PC-3 (cell line): ENCODE measurements at regions of chr11 and their contacts with region 1.

Region 1: GRCh38 chr11:13668102-13668956 is at the start of gene FAR1:
- DNase-seq: peak; percentile 98
- ATAC-seq: peak; percentile 86
- H3K4me3 ChIP-seq: peak within 1 kb of the TSS; percentile 92
- H3K27ac ChIP-seq: peak within 1 kb of the TSS; percentile 28; the same call in 1 of the 2 replicates
- H3K4me1 ChIP-seq: peaks cover 28% of the 10 kb centered on the region
- H3K27me3 ChIP-seq: no peaks in the 10 kb centered on the region
- CTCF ChIP-seq: peak; percentile 54
- total RNA-seq, gene FAR1: 31.6 and 45.6 TPM in 2 replicates

Region 2: DNA sequence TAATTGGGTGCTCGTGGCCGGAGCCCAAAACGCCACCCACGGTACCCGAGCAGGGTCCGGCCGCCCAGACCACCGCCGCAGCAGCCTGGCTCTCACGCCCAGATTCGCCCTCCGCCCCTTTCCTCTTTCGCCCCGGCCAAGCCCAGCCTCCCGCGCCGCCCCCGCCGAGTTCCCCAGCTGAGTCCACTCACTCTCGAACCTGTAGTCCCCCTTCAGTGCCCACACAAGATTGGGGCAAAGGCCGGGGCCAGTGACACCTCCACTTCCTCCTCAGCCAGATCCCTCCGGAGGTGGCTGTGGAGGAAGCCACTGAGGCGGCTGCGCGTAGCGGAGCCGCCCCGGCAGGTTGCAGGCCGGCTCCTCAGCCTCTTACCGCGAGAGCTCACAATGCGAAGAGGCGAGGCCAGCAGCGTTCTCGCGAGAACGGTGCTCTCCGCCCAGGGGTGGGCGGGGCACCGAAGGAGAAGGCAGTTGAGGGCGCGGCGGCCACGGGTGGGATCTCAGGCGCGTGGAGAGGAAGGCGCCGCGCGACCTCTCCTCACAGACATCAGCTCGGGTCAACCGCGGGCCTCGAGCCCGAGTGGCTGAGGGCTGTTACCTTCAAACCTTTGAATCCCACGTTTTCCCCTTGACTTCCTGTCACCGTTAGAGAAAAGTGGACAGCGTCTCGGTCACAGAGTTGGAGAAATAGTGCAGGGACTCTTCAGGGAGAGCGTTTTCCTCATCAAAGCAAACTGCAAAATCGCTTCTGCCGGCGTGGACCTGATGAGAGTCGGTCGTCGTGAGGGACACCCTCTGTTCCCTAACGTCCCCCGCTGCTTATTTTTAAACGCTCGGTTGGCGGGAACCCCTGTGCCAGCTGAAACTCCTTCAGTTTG is 205.2 kb before region 1 on chr11 and contains the start of gene BTBD10:
- CTCF ChIA-PET with region 1: no interaction called
- POLR2A ChIA-PET with region 1: no interaction called
- intact Hi-C with region 1: loop called (anchors 10 kb)
- DNase-seq: peak; percentile 97
- ATAC-seq: peak; percentile 97
- H3K4me3 ChIP-seq: peak within 1 kb of the TSS; percentile 92
- H3K27ac ChIP-seq: peak within 1 kb of the TSS; percentile 67
- H3K4me1 ChIP-seq: peaks cover 16% of the 10 kb centered on the region
- H3K27me3 ChIP-seq: no peaks in the 10 kb centered on the region
- CTCF ChIP-seq: no peak
- total RNA-seq, gene BTBD10: 30.2 and 32.5 TPM in 2 replicates

Region 3: DNA sequence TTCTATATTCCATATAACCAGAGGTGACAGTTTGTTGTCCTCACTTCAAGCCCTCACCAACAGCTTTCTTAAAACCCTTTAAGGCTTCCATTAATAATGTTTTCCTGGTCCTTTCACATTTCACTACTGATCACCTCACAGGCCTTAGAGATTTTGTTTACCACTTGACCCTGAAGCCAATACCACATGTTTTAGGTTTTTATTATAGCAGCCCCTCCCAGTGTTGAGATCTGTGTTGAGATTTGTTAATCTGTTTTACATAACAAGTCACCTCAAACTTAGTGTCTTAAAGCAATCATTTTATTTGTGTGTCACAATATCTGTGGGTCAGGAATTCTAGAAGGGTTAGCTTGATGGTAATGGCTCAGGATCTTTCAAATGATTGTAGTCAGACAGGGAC is 50.1 kb after region 1 on chr11:
- CTCF ChIA-PET with region 1: interaction called, 11 read pairs
- POLR2A ChIA-PET with region 1: no interaction called
- intact Hi-C with region 1: no loop called
- DNase-seq: no peak
- ATAC-seq: no peak
- H3K4me3 ChIP-seq: no peak overlapping the region
- H3K27ac ChIP-seq: no peak overlapping the region
- H3K4me1 ChIP-seq: peaks cover 11% of the 10 kb centered on the region; the same call in 1 of the 2 replicates
- H3K27me3 ChIP-seq: no peaks in the 10 kb centered on the region
- CTCF ChIP-seq: no peak